RWPE1 (cell line): ENCODE measurements at regions of chr11 and their contacts with region 1.

Region 1: DNA sequence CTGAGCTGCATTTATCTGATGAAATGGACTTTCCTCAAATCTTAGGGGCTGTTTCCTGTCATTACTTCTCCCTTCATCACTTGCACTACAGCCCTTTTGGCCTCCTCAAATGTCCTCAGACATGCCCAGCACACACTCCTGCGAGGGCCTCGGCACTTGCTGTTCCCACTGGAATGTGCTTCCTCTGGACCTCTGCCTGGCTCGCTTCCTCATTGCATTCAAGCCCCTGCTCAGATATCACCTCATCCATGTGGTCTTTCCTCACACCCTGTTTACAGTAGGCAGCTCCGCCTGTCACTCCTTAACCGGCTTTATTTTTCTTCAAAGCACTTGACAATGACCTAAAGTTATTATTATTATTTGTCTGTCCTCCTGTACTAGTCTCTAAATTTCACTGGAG is 9.0 kb downstream of the NAT10 start:
- DNase-seq: no peak
- H3K27ac ChIP-seq: no peak overlapping the region
- CTCF ChIP-seq: no peak

Region 2: DNA sequence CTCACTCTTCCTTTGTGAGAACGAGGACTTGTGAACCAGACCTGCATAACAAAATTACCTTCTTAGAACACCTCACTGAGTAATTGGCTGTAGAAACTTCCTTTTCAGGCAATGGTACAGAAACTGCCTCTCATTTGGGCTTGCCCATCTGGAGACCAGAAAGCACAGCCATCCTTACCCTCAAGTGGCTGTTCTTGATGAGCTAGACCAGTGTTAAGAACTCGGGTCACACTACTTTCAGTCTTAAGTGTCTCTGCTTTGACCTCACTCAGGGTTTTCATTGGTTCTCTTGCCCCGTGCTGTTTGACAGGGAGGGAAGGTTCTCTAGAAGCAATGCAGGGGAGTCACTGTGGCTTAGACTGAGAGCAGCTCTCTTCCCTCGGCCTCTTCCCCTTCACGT is 20.3 kb after region 1 on chr11:
- CTCF ChIA-PET with region 1: interaction called, 5 read pairs
- POLR2A ChIA-PET with region 1: interaction called, 11 read pairs
- DNase-seq: no peak
- H3K27ac ChIP-seq: no peak overlapping the region
- CTCF ChIP-seq: no peak

Region 3: GRCh38 chr11:34366522-34366921 is 252.1 kb after region 1 on chr11:
- CTCF ChIA-PET with region 1: no interaction called
- POLR2A ChIA-PET with region 1: no interaction called
- DNase-seq: no peak
- H3K27ac ChIP-seq: no peak overlapping the region
- CTCF ChIP-seq: no peak